ENCODE measurements at regions of chr21 and their contacts with region 1.

Region 1: DNA sequence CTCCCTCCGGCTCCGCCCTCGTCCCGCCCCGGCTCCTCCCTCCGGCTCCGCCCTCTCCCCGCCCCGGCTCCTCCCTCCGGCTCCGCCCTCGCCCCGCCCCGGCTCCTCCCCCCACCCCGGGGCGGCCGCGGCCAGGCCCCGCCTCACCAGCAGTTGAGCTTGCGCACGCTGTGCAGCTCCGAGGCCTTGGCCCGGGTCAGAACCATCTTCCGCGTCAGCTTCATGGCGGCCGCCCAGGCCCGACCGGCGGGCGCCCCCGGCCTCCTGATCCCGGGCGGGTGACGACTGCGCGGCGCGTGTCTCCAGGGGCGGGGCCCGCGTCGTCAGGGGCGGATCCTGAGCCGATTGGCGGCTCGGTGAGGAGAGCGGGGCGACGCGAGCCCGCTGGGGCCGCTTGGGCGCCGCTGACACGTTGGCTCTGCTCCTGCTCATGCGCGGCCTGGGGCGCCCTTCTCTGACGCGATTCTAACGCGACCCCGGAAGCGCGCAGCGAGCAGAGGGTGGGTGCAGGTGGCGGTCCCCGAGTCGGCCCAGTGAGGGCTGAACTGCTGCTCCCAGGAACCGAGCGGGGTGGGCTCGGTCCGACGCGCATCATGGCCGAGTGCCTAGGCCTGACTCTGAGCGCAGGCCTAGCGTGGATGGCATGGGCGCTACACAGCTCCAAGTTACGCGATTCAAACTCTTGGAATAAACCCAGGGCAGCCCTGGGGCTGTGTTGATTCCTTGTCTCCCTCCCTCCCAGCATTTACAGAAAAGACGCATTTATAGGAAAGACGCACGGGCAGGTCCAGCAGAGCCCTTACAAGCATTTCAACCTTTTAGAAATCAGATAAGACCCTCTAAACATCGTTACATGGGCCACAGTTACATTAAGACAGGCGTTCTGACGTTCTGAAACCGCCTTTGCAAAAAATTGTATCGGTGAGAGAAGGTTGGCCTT is at the start of gene CFAP410:
- DNase-seq: peak; percentile 97
- H3K4me3 ChIP-seq: peak within 1 kb of the TSS; percentile 69 to 84 (median 76)
- H3K27ac ChIP-seq: peak within 1 kb of the TSS; percentile 93 to 99 (median 96)
- H3K4me1 ChIP-seq: peaks cover 0 to 22% (median 18%) of the 10 kb centered on the region in 4 donors
- H3K27me3 ChIP-seq: no peaks in the 10 kb centered on the region
- CTCF ChIP-seq: no peak
- EP300 ChIP-seq: peak in 1 of 4 donors; percentile 76
- POLR2A ChIP-seq: peak; percentile 94
- total RNA-seq, gene CFAP410: 25.8 to 31.1 (median 27.6) TPM

Region 2: DNA sequence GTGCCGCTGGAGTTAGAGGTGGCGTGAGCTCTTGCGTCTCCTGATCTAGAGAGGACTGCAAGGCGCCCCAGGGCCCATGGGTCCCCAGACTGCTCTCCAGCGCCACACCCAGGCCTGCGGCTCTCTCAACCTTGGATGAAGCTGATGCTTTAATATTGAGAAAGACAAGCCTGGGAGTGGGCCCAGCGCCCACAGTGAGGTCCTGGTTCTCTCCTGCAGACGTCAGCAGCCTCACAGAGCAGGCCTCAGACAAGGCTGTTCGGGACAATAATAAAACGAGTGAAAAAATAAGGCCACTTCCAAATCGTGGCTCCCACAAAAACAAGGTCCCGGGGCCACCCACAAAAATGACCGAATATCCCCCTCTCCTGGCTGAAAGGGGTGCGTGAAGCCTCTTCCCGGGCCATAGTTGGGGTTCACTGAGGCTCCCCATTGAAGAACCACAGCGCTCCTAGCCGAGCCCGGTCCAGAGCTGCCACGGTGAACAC is 71.5 kb before region 1 on chr21:
- intact Hi-C with region 1: no loop called
- DNase-seq: no peak
- H3K4me3 ChIP-seq: no peak overlapping the region
- H3K27ac ChIP-seq: no peak overlapping the region
- H3K4me1 ChIP-seq: no peaks in the 10 kb centered on the region
- H3K27me3 ChIP-seq: peaks cover 0 to 9% (median 1%) of the 10 kb centered on the region in 3 donors
- CTCF ChIP-seq: no peak
- EP300 ChIP-seq: no peak
- POLR2A ChIP-seq: no peak

Region 3: GRCh38 chr21:44299458-44300261 is 39.6 kb before region 1 on chr21 and contains the start of gene PFKL:
- intact Hi-C with region 1: loop called (anchors 2 kb)
- DNase-seq: peak; percentile 81
- H3K4me3 ChIP-seq: peak within 1 kb of the TSS; percentile 80 to 96 (median 92)
- H3K27ac ChIP-seq: peak within 1 kb of the TSS; percentile 89 to 96 (median 92)
- H3K4me1 ChIP-seq: peaks cover 0 to 63% (median 51%) of the 10 kb centered on the region in 4 donors
- H3K27me3 ChIP-seq: peaks cover 0 to 25% (median 25%) of the 10 kb centered on the region in 3 donors
- CTCF ChIP-seq: no peak
- EP300 ChIP-seq: no peak
- POLR2A ChIP-seq: peak in 1 of 2 donors; percentile 33
- total RNA-seq, gene PFKL: 38.0 to 69.8 (median 50.4) TPM

Region 4: GRCh38 chr21:44438531-44439207 is 99.4 kb after region 1 on chr21:
- intact Hi-C with region 1: loop called (anchors 5 kb)
- DNase-seq: peak; percentile 87
- H3K4me3 ChIP-seq: peak overlapping the region; percentile 14 to 42 (median 28)
- H3K27ac ChIP-seq: peak overlapping the region; percentile 53 to 81 (median 74)
- H3K4me1 ChIP-seq: peaks cover 0 to 32% (median 25%) of the 10 kb centered on the region in 4 donors
- H3K27me3 ChIP-seq: no peaks in the 10 kb centered on the region
- CTCF ChIP-seq: no peak
- EP300 ChIP-seq: peak in 3 of 4 donors; percentile 23 to 72 (median 54)
- POLR2A ChIP-seq: no peak